Common myeloid progenitor, CD34-positive (primary cell): ENCODE measurements at regions of chr3 and their contacts with region 1.

Region 1: DNA sequence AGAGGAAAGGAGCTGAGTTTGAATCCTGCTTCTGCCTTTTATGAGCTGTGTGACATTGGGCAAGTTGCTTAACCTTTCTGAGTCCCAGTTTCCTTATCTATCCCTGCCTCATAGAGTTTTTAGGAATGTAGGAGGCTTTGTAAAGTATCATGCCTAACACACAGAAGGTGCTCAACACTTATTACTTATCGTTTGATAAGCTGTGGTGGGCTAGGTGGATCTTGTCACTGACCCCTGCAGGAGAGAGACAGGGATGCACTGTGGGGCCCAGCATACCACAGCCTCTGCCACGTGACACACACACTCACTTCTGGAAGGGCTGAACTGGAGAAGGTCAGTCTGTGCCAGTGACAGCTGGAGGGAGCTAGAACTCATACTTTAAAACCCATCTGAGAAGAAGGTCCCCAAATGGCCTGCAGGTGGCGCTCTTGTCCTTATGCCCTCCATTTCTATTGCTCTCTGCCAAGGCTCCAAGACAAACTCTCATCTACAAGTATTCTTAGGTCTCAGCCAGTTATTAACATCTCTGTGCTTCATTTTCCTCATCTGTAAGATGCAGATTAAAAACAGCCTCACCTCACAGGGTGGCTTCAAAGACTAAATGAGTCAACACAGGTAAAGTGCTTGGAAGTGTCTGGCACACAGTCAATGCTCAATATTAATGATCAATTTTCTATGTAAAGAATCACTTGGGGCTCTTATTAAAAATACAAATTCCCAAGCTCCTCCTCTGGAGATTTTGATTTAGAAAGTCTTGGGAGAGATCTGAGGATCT is 57.5 kb upstream of the HACD2 start:
- DNase-seq: peak; percentile 86 to 90 (median 89)
- H3K4me3 ChIP-seq: no peak overlapping the region
- H3K27ac ChIP-seq: no peak overlapping the region
- H3K4me1 ChIP-seq: peaks cover 0 to 5% (median 0%) of the 10 kb centered on the region in 4 experiments
- H3K27me3 ChIP-seq: no peaks in the 10 kb centered on the region

Region 2: DNA sequence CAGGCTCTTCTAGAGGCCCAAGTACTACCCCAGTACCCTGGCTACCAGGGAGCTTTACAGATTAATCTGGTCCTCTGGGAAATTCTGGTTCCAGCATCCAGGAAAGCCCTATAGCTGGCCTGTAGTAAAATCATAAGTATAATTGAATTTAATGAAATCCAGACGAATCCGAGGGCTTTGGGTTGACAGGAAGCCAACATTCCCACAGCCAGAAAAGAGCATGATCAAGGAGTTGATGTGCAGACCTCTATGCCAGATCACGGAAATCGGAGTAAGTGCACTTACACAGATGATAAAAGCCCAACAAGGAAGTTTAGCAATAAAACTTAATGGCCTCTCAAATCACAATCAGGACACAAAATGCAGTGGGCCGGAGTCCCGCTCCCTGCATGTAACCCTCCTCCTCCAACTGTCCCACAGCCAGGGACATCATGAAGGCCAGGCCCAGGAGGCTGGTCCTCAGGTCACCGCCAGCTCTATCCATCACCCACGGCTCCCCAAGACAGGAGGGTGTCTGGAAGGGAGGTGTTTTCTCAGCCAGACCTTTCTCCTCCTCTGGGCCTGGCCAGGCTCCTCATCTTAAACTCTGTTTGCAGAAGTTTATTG is 503.4 kb before region 1 on chr3:
- CTCF ChIA-PET with region 1: no interaction called
- POLR2A ChIA-PET with region 1: no interaction called
- DNase-seq: no peak
- H3K4me3 ChIP-seq: no peak overlapping the region
- H3K27ac ChIP-seq: no peak overlapping the region
- H3K4me1 ChIP-seq: no peaks in the 10 kb centered on the region
- H3K27me3 ChIP-seq: no peaks in the 10 kb centered on the region

Region 3: GRCh38 chr3:123244128-123244527 is 398.2 kb before region 1 on chr3:
- CTCF ChIA-PET with region 1: no interaction called
- POLR2A ChIA-PET with region 1: no interaction called
- DNase-seq: peak in 1 of 3 donors; percentile 21
- H3K4me3 ChIP-seq: no peak overlapping the region
- H3K27ac ChIP-seq: no peak overlapping the region
- H3K4me1 ChIP-seq: no peaks in the 10 kb centered on the region
- H3K27me3 ChIP-seq: no peaks in the 10 kb centered on the region

Region 4: GRCh38 chr3:123258811-123259420 is 383.5 kb before region 1 on chr3:
- CTCF ChIA-PET with region 1: no interaction called
- POLR2A ChIA-PET with region 1: no interaction called
- DNase-seq: peak; percentile 71 to 83 (median 82)
- H3K4me3 ChIP-seq: no peak overlapping the region
- H3K27ac ChIP-seq: no peak overlapping the region
- H3K4me1 ChIP-seq: no peaks in the 10 kb centered on the region
- H3K27me3 ChIP-seq: no peaks in the 10 kb centered on the region

Region 5: GRCh38 chr3:123613543-123613942 is 28.8 kb before region 1 on chr3:
- CTCF ChIA-PET with region 1: interaction called, 11 read pairs
- POLR2A ChIA-PET with region 1: no interaction called
- DNase-seq: no peak
- H3K4me3 ChIP-seq: no peak overlapping the region
- H3K27ac ChIP-seq: no peak overlapping the region
- H3K4me1 ChIP-seq: peaks cover 14 to 46% (median 23%) of the 10 kb centered on the region in 4 experiments
- H3K27me3 ChIP-seq: no peaks in the 10 kb centered on the region

Region 6: GRCh38 chr3:123618768-123619484 is 23.4 kb before region 1 on chr3:
- CTCF ChIA-PET with region 1: interaction called, 11 read pairs
- POLR2A ChIA-PET with region 1: no interaction called
- DNase-seq: peak; percentile 91 to 97 (median 95)
- H3K4me3 ChIP-seq: peak overlapping the region in 5 of 7 experiments; percentile 3 to 52 (median 22)
- H3K27ac ChIP-seq: no peak overlapping the region
- H3K4me1 ChIP-seq: peaks cover 8 to 27% (median 18%) of the 10 kb centered on the region in 4 experiments
- H3K27me3 ChIP-seq: no peaks in the 10 kb centered on the region

Region 7: GRCh38 chr3:123632161-123632655 is 10.2 kb before region 1 on chr3:
- CTCF ChIA-PET with region 1: interaction called, 10 read pairs
- POLR2A ChIA-PET with region 1: no interaction called
- DNase-seq: no peak
- H3K4me3 ChIP-seq: no peak overlapping the region
- H3K27ac ChIP-seq: no peak overlapping the region
- H3K4me1 ChIP-seq: peaks cover 0 to 11% (median 5%) of the 10 kb centered on the region in 4 experiments
- H3K27me3 ChIP-seq: no peaks in the 10 kb centered on the region

Region 8: DNA sequence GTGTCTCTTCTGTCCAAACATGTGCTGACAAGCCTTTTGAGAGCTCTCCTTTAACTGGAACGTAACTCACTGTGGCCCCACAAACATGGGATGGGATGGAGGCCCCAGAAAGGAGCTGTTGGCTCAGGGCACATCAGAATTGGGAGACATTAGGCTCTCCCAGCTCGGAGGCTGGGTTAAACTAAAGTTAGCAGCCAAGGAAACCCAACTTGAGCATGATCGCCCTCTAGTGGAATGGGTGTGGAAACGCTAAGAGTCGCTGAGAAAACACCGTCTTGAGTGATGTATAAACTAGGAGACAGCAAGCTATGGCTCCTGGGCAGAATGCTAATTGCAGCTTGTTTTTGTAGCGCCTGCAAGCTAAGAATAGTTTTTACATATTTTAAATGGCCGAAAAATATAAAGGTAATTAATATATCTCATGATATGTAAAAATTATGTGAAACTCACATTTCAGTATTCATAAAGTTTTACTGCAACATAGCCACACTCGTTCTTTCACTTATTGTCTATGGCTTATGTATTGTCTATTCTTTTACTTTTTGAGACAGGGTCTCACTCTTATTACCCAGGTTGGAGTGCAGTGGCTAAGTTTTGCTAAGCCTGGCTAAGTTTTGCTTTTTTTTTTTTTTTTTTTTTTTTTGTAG is 81.3 kb after region 1 on chr3:
- CTCF ChIA-PET with region 1: interaction called, 611 read pairs
- POLR2A ChIA-PET with region 1: no interaction called
- DNase-seq: peak; percentile 78 to 91 (median 87)
- H3K4me3 ChIP-seq: peak overlapping the region in 2 of 7 experiments; percentile 22 to 64
- H3K27ac ChIP-seq: no peak overlapping the region
- H3K4me1 ChIP-seq: peaks cover 0 to 12% (median 2%) of the 10 kb centered on the region in 4 experiments
- H3K27me3 ChIP-seq: no peaks in the 10 kb centered on the region